ENCODE measurements at regions of chr1 and their contacts with region 1.

Region 1: DNA sequence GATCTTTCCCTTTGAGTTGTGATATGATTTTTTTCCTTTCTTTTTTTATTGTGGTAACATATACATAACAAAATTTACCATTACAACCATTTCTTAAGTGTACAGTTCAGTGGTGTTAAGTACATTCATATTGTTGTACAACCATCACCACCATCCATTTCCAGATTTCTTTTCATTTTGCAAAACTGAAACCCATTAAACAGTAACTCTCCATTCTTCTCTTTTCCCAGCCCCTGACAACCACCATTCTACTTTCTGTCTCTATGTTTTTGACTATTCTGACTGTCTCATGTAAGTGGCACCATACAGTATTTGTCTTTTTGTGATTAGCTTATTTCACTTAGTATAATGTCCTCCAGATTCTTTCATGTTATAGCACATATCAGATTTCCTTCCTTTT is 30.3 kb downstream of the CEP350 start:
- DNase-seq: no peak
- H3K4me3 ChIP-seq: no peak overlapping the region
- H3K27ac ChIP-seq: no peak overlapping the region
- H3K4me1 ChIP-seq: no peaks in the 10 kb centered on the region
- H3K27me3 ChIP-seq: no peaks in the 10 kb centered on the region
- CTCF ChIP-seq: no peak
- POLR2A ChIP-seq: no peak

Region 2: DNA sequence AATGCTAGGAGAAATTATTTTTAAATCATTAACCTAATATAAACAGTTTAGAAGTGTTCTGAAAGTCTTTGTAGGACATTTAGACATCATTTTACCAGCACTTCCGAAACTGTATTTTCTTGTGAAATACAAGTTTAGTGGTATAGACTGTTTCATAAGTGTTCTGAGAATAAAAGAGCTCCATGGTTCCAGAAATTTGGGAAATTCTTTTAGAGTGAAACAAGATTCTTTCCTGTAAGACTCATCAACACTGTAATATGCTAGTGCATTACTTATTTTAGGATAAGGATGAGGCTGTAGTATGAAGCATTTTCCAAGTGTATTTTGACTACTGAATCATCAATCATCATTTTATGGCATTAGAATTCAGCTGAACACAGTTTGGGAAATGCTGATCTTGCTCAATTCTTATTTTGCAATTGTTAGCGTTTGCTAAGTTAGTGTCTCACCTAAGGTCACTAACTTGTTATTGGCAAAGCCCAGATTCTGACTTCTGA is 43.1 kb after region 1 on chr1:
- intact Hi-C with region 1: no loop called
- DNase-seq: no peak
- H3K4me3 ChIP-seq: no peak overlapping the region
- H3K27ac ChIP-seq: no peak overlapping the region
- H3K4me1 ChIP-seq: no peaks in the 10 kb centered on the region
- H3K27me3 ChIP-seq: no peaks in the 10 kb centered on the region
- CTCF ChIP-seq: no peak
- POLR2A ChIP-seq: no peak

Region 3: GRCh38 chr1:180470031-180470430 is 485.1 kb after region 1 on chr1:
- intact Hi-C with region 1: loop called (anchors 10 kb)
- DNase-seq: no peak
- H3K4me3 ChIP-seq: no peak overlapping the region
- H3K27ac ChIP-seq: no peak overlapping the region
- H3K4me1 ChIP-seq: no peaks in the 10 kb centered on the region
- H3K27me3 ChIP-seq: no peaks in the 10 kb centered on the region
- CTCF ChIP-seq: no peak
- POLR2A ChIP-seq: no peak